ENCODE measurements at regions of chr10 and their contacts with region 1.

Region 1: GRCh38 chr10:63173468-63174232 is 40.5 kb downstream of the NRBF2 start:
- DNase-seq: no peak
- ATAC-seq: peak; percentile 72
- H3K4me3 ChIP-seq: no peak overlapping the region
- H3K4me3 Mint-ChIP-seq: peak overlapping the region in 2 of 10 donors; percentile 45 to 56
- H3K27ac ChIP-seq: no peak overlapping the region
- H3K27ac Mint-ChIP-seq: peak overlapping the region; percentile 32 to 88 (median 75)
- H3K4me1 ChIP-seq: no peaks in the 10 kb centered on the region
- H3K4me1 Mint-ChIP-seq: peaks cover 4 to 69% (median 25%) of the 10 kb centered on the region in 7 donors
- H3K27me3 ChIP-seq: no peaks in the 10 kb centered on the region
- H3K27me3 Mint-ChIP-seq: no peaks in the 10 kb centered on the region

Region 2: DNA sequence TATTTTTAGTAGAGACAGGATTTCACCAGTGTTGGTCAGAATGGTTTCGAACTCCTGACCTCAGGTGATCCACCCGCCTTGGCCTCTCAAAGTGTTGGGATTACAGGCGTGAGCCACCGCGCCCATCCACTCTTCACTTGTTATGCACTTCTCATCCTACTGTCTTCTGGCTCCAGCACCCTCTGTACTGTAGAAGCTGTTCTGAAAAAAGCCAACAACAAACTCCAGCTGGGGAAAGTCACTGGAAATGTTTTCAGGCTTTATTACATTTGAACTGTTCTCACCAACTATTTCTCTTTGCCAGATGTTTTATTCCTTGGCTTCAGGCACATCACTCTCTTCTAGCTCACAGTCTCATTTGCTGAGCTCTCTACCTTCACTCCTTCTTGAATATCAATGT is 235.0 kb before region 1 on chr10:
- CTCF ChIA-PET with region 1: no interaction called
- POLR2A ChIA-PET with region 1: no interaction called
- intact Hi-C with region 1: no loop called
- DNase-seq: no peak
- ATAC-seq: no peak
- H3K4me3 ChIP-seq: no peak overlapping the region
- H3K4me3 Mint-ChIP-seq: no peak overlapping the region
- H3K27ac ChIP-seq: no peak overlapping the region
- H3K27ac Mint-ChIP-seq: no peak overlapping the region
- H3K4me1 ChIP-seq: no peaks in the 10 kb centered on the region
- H3K4me1 Mint-ChIP-seq: no peaks in the 10 kb centered on the region
- H3K27me3 ChIP-seq: no peaks in the 10 kb centered on the region
- H3K27me3 Mint-ChIP-seq: peaks cover 4 to 28% (median 10%) of the 10 kb centered on the region in 5 donors

Region 3: DNA sequence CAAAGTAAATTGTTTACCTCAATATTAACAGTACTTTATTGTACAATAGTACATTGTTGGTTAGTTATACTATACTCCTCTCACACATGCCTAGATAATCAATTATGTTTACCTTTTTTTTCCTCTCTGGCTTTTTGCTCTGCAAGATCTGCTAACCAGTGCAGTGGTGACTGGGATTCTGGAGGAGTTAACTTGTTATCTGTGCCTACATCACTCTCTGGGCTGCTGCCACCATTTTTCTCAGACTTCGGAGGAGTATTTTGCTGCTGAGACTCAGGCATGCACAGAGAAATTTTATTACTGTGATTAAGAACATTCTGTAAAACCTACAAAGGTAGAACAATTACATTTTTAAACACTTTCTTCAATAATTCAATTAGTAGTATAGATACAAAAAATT is 19.2 kb after region 1 on chr10:
- CTCF ChIA-PET with region 1: no interaction called
- POLR2A ChIA-PET with region 1: no interaction called
- intact Hi-C with region 1: no loop called
- DNase-seq: no peak
- ATAC-seq: no peak
- H3K4me3 ChIP-seq: no peak overlapping the region
- H3K4me3 Mint-ChIP-seq: no peak overlapping the region
- H3K27ac ChIP-seq: no peak overlapping the region
- H3K27ac Mint-ChIP-seq: peak overlapping the region in 2 of 9 donors; percentile 41 to 60
- H3K4me1 ChIP-seq: no peaks in the 10 kb centered on the region
- H3K4me1 Mint-ChIP-seq: peaks cover 0 to 3% (median 0%) of the 10 kb centered on the region in 7 donors
- H3K27me3 ChIP-seq: no peaks in the 10 kb centered on the region
- H3K27me3 Mint-ChIP-seq: no peaks in the 10 kb centered on the region

Region 4: DNA sequence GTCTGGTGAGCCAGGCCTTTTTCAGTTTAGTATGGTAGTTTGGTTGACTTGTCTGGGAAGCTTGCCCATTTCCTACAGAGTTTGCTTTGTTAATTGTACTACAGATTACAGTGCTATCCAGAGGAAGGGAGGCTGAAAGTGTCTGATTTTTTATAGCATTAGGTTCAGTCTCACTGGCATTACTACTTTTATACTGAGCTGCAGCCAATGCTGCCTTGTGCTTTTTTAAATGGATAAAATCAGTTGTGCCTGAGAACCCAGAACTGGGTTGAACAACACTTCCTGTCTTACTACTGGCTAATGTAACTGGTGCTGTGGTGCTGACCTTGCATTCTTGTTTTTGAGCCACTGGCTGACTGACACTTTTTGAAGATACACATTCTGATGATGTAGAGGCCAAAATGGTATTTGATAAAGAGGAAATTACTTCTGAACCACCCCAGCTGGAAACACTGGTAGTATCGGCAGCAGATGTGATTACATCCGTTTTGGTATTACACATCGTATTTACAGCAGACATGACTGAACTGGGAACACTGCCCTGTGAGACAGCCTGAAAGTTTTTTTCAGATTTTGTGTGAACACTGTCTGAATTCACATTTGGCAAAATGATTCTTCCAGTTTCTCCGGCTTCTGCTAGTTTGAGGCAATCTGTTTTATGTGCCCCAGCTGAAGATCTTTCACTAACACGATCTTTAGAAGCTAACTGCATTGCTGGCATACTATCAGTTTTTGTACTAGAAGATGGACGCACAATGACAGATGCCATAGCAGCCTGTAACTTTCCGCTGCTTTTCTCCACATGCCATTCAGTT is 33.6 kb after region 1 on chr10:
- CTCF ChIA-PET with region 1: no interaction called
- POLR2A ChIA-PET with region 1: no interaction called
- intact Hi-C with region 1: loop called (anchors 1 to 5 kb)
- DNase-seq: no peak
- ATAC-seq: peak; percentile 39
- H3K4me3 ChIP-seq: no peak overlapping the region
- H3K4me3 Mint-ChIP-seq: peak overlapping the region in 7 of 10 donors; percentile 13 to 61 (median 34)
- H3K27ac ChIP-seq: no peak overlapping the region
- H3K27ac Mint-ChIP-seq: peak overlapping the region in 7 of 9 donors; percentile 10 to 82 (median 34)
- H3K4me1 ChIP-seq: peaks cover 14 to 35% of the 10 kb centered on the region in 2 donors
- H3K4me1 Mint-ChIP-seq: peaks cover 26 to 74% (median 67%) of the 10 kb centered on the region in 7 donors
- H3K27me3 ChIP-seq: no peaks in the 10 kb centered on the region
- H3K27me3 Mint-ChIP-seq: no peaks in the 10 kb centered on the region

Region 5: DNA sequence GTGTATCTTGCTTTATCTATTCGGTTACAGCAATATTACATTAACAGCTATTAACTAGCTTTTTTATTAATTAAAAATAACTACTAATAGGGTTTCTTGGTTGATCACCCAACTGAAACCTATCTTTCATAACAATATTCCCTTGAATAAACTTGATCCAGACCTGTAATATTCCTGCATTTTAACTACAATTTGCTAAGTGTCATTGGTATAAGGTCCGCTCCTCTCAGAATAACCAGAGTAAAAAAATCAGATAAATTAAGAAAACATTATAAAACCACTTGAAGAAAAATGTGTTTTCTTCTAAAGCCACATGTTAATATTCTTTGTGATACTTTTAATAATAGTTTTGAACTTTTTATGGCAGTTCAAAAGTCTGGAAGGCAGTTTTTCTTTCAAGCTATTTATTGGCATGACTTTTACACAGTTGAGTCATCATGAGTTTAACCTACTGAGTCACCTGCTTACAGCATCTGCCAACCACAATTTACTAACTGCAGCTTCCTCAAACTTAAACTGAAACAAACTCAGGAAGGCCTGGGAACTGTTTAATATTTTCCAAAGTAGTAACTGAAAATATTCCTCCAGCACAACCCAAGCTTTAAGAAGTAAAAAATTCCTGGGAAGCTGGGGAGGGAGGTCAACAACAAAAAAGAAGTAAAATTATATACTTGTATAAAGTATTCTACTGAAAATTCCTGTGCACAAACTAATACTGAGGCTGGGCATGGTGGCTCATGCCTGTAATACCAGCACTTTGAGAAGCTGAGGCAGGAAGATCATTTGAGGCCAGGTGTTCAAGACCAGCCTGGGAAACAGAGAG is 62.7 kb after region 1 on chr10:
- CTCF ChIA-PET with region 1: no interaction called
- POLR2A ChIA-PET with region 1: no interaction called
- intact Hi-C with region 1: no loop called
- DNase-seq: no peak
- ATAC-seq: peak; percentile 82
- H3K4me3 ChIP-seq: no peak overlapping the region
- H3K4me3 Mint-ChIP-seq: peak overlapping the region in 4 of 10 donors; percentile 14 to 51 (median 40)
- H3K27ac ChIP-seq: no peak overlapping the region
- H3K27ac Mint-ChIP-seq: peak overlapping the region in 4 of 9 donors; percentile 5 to 73 (median 20)
- H3K4me1 ChIP-seq: peaks cover 35 to 36% of the 10 kb centered on the region in 2 donors
- H3K4me1 Mint-ChIP-seq: peaks cover 33 to 82% (median 65%) of the 10 kb centered on the region in 7 donors
- H3K27me3 ChIP-seq: no peaks in the 10 kb centered on the region
- H3K27me3 Mint-ChIP-seq: no peaks in the 10 kb centered on the region

Region 6: GRCh38 chr10:63666836-63667383 is 493.3 kb after region 1 on chr10:
- CTCF ChIA-PET with region 1: no interaction called
- POLR2A ChIA-PET with region 1: no interaction called
- intact Hi-C with region 1: no loop called
- DNase-seq: no peak
- ATAC-seq: no peak
- H3K4me3 ChIP-seq: no peak overlapping the region
- H3K4me3 Mint-ChIP-seq: no peak overlapping the region
- H3K27ac ChIP-seq: no peak overlapping the region
- H3K27ac Mint-ChIP-seq: no peak overlapping the region
- H3K4me1 ChIP-seq: no peaks in the 10 kb centered on the region
- H3K4me1 Mint-ChIP-seq: no peaks in the 10 kb centered on the region
- H3K27me3 ChIP-seq: no peaks in the 10 kb centered on the region
- H3K27me3 Mint-ChIP-seq: peaks cover 0 to 14% (median 0%) of the 10 kb centered on the region in 5 donors

Region 7: DNA sequence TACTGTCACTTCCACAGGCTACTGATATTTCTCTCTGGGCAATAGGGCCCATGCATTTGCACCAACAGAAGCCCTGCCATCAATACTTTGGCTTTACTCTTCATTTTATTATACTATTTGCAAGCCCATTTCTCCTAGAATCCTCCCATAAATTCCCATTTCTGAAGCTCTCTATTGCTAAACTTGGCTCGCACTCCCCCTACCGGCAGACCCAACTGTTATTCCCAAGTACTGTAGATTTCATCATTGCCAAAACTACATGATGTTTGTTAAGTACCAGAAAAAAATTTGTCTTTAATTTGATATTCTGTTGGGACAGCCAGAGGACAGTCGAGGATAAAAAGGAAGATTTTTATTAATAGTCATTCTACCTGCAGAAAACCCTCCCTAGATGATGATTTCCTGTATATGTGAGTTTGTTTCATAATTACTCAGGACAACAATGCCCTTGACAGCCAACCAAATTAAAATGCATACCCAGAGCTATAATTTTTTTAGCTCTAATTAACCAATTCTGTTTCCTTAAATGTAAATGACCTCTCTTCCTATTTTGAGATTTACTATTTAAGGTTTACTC is 646.2 kb after region 1 on chr10:
- CTCF ChIA-PET with region 1: no interaction called
- POLR2A ChIA-PET with region 1: no interaction called
- intact Hi-C with region 1: loop called in 1 of 2 experiments (anchors 5 kb)
- DNase-seq: no peak
- ATAC-seq: no peak
- H3K4me3 ChIP-seq: no peak overlapping the region
- H3K4me3 Mint-ChIP-seq: no peak overlapping the region
- H3K27ac ChIP-seq: no peak overlapping the region
- H3K27ac Mint-ChIP-seq: no peak overlapping the region
- H3K4me1 ChIP-seq: no peaks in the 10 kb centered on the region
- H3K4me1 Mint-ChIP-seq: no peaks in the 10 kb centered on the region
- H3K27me3 ChIP-seq: no peaks in the 10 kb centered on the region
- H3K27me3 Mint-ChIP-seq: peaks cover 16 to 47% (median 37%) of the 10 kb centered on the region in 5 donors

Measured in naive thymus-derived CD4-positive, alpha-beta T cell (primary cell).